CD4-positive, alpha-beta memory T cell (primary cell): ENCODE measurements at regions of chr17 and their contacts with region 1.

Region 1: DNA sequence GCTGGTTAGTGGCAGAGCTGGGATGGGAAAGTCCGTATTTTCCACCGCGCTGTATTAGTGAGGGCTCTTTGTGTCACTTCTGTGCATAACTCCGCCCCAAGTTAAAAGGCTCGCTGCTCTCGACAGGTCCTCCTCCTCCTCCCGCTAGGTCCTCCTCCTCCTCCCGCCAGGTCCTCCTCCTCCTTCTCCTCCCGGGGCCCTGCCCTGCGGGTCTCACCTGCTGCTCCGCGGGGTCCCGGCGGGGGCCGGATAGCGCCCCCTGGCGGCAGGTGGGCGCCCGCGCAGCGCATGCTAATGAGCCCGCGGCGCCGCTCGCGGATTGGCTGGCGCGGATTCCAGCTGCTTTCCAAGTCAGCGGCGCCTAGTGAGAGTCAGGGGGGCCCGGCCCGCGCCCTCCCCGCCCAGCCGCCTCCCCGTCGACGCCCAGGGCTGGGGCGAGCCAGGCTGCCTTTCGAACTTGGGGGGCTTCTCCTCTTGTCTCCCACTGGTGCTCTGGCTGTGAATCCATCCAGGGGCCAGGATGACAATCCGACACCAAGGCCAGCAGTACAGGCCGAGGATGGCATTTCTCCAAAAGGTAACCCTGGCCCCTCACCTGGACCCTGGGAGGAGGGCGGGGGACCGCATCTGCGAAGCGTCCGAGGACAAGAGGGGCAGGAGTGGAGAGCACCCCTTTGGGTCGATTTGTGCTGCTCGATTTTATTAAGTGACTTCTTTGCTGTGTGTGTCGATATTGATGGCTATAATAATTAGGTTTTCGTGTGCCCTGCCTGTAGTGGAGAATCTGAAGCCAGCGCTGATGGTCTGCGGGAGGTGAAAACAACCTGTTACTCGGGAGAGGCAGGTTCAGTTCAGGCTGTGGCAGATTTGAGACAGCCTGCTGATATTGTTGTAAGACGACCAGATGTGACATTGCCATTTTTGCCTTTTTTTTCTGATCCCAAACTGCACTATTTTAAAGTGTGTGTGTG is at the start of gene RGS9:
- DNase-seq: peak; percentile 84 to 88 (median 85)
- H3K4me3 ChIP-seq: peak within 1 kb of the TSS; percentile 36 to 50
- H3K4me3 Mint-ChIP-seq: peak within 1 kb of the TSS; percentile 76 to 91 (median 85)
- H3K27ac ChIP-seq: no peak within 1 kb of the TSS
- H3K27ac Mint-ChIP-seq: peak within 1 kb of the TSS in 6 of 7 donors; percentile 57 to 85 (median 74)
- H3K4me1 ChIP-seq: peaks cover 26% of the 10 kb centered on the region
- H3K4me1 Mint-ChIP-seq: peaks cover 11 to 41% (median 22%) of the 10 kb centered on the region in 4 donors
- H3K27me3 ChIP-seq: no peaks in the 10 kb centered on the region
- H3K27me3 Mint-ChIP-seq: peaks cover 0 to 1% of the 10 kb centered on the region in 2 donors
- total RNA-seq, gene RGS9: 0.67 to 0.84 TPM

Region 2: DNA sequence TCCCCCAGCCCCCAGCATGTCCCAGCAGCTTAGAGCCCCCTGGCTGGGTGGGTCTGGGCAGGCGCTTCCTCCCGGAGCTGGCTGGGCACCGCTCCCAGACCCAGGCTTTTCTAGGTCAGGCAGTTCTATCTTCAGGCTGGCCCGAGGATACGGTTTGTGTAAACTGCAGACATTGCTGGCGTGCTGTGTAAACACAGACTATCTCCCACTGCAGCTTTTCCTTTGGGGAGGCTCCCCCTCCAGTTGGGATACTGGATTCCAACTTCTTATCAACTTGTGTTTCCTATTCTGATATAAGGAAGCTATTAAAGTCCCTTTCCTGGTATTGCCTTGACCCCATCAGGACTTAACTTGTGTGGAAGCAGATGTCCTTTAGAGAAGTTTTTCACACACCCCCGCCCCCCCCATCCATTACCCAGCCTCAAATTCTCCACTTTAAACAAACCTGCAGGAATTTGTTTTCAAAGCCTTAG is 62.5 kb before region 1 on chr17:
- CTCF ChIA-PET with region 1: no interaction called
- POLR2A ChIA-PET with region 1: no interaction called
- intact Hi-C with region 1: no loop called
- DNase-seq: no peak
- H3K4me3 ChIP-seq: no peak overlapping the region
- H3K4me3 Mint-ChIP-seq: no peak overlapping the region
- H3K27ac ChIP-seq: no peak overlapping the region
- H3K27ac Mint-ChIP-seq: no peak overlapping the region
- H3K4me1 ChIP-seq: no peaks in the 10 kb centered on the region
- H3K4me1 Mint-ChIP-seq: no peaks in the 10 kb centered on the region
- H3K27me3 ChIP-seq: no peaks in the 10 kb centered on the region
- H3K27me3 Mint-ChIP-seq: no peaks in the 10 kb centered on the region

Region 3: GRCh38 chr17:65122836-65123756 is 14.2 kb before region 1 on chr17:
- CTCF ChIA-PET with region 1: interaction called, 15 read pairs
- POLR2A ChIA-PET with region 1: interaction called, 16 read pairs
- intact Hi-C with region 1: loop called (anchors 1 kb)
- DNase-seq: peak; percentile 86 to 90 (median 88)
- H3K4me3 ChIP-seq: peak overlapping the region; percentile 4 to 57
- H3K4me3 Mint-ChIP-seq: peak overlapping the region; percentile 87 to 96 (median 92)
- H3K27ac ChIP-seq: peak overlapping the region; percentile 53
- H3K27ac Mint-ChIP-seq: peak overlapping the region; percentile 80 to 99 (median 99)
- H3K4me1 ChIP-seq: peaks cover 20% of the 10 kb centered on the region
- H3K4me1 Mint-ChIP-seq: peaks cover 11 to 27% (median 20%) of the 10 kb centered on the region in 4 donors
- H3K27me3 ChIP-seq: no peaks in the 10 kb centered on the region
- H3K27me3 Mint-ChIP-seq: peaks cover 0 to 5% of the 10 kb centered on the region in 2 donors

Region 4: DNA sequence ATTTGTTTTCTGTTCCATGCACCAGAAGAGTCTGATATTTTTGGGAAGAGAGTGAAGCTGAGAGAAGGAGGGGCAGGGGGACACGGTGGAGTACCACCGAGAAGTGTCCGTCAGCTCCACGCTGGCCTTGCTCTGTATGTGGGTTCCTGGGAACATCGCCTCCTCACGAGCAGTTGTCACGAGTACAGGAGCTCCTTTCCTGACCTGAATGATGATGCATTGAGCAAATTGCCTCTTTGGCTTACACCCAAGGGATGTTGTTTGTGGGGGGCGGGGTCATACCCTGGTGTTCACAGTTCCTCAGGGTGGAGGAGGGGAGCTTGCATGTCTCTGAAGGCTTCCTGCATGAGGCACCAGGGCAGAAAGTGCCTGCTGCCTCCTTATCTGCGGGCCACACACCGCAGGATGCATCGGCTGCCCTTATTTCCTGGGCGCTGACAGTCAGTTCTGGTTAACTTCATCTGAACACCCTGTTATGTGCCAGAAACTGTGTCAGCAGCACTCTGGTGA is 36.0 kb after region 1 on chr17:
- CTCF ChIA-PET with region 1: interaction called, 15 read pairs
- POLR2A ChIA-PET with region 1: interaction called, 9 read pairs
- intact Hi-C with region 1: no loop called
- DNase-seq: peak; percentile 77 to 88 (median 82)
- H3K4me3 ChIP-seq: peak overlapping the region in 1 of 2 donors; percentile 11
- H3K4me3 Mint-ChIP-seq: no peak overlapping the region
- H3K27ac ChIP-seq: peak overlapping the region; percentile 43
- H3K27ac Mint-ChIP-seq: peak overlapping the region in 1 of 7 donors; percentile 90
- H3K4me1 ChIP-seq: peaks cover 44% of the 10 kb centered on the region
- H3K4me1 Mint-ChIP-seq: peaks cover 17 to 31% (median 27%) of the 10 kb centered on the region in 4 donors
- H3K27me3 ChIP-seq: no peaks in the 10 kb centered on the region
- H3K27me3 Mint-ChIP-seq: peaks cover 0 to 1% of the 10 kb centered on the region in 2 donors

Region 5: DNA sequence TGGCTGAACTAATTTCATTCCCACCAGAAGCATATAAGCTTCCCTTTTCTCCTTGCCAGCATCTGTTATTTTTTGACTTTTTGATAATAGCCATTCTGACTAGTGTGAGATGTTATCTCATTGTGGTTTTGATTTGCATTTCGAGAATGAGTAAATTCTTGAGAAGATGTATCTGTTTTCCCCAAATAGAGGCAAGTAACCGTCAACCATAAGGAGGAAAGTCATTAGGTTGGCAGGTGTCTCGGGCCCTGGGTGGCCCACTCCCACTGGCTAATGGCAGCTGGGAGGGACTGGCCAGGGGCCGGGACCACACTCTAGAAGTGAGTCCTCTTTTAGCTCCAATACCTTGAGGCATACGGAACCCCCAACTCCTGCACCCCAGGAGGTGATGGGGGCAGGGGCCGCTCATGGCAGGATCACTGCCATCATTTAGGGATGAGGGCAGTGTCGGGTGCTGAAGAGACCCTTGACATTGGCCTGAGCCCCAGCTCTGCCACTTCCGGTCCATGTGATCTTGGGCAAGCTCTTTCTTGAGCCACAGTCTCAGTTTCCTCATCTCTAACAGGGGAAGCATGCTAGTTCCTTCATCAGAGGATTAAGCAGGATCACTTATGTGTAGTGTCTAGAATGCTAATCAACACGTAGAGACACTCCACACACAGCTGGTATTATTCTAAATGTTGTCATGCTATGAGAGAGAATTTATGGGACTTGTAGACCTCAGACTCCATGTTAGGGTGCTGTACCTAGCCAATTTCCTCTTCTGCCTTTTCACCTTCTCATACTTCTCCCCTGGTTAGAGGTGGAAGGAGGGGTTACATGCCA is 44.1 kb after region 1 on chr17:
- CTCF ChIA-PET with region 1: interaction called, 15 read pairs
- POLR2A ChIA-PET with region 1: interaction called, 9 read pairs
- intact Hi-C with region 1: no loop called
- DNase-seq: peak in 2 of 5 donors; percentile 21 to 22
- H3K4me3 ChIP-seq: no peak overlapping the region
- H3K4me3 Mint-ChIP-seq: peak overlapping the region; percentile 10 to 86 (median 58)
- H3K27ac ChIP-seq: peak overlapping the region; percentile 2
- H3K27ac Mint-ChIP-seq: peak overlapping the region; percentile 63 to 98 (median 90)
- H3K4me1 ChIP-seq: peaks cover 54% of the 10 kb centered on the region
- H3K4me1 Mint-ChIP-seq: peaks cover 51 to 76% (median 66%) of the 10 kb centered on the region in 4 donors
- H3K27me3 ChIP-seq: no peaks in the 10 kb centered on the region
- H3K27me3 Mint-ChIP-seq: no peaks in the 10 kb centered on the region

Region 6: DNA sequence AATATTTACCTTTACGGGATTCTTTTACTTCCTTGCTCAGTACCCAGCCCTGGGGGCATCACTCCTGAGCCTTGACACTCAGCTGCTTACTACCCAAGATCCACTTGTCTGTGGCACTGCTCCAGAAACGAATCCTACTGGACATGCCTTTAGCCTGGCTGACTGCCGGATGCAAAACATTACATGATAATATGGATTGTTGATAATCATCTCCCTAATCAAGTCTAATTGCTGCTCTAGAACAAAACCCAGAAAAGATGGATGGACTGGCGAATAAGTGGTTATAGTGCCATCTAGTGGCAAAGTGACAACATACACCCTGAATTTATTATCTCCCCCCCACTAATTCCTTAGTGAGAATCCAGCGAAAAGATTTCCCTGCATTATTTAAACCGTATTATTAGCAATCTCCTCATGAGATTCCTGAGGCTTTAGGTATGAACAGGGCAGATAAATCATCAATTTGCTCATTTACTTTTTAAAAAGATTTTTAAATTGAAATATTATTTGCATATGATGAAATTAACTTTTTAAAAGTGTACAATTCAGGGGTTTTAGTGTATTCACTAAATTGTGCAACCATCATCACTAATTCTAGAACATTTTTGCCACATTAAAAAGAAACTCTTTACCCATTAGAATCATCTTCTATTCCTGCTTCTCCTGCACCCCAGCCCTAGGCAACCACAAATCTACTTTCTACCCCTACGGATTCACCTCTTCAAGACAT is 61.5 kb after region 1 on chr17:
- CTCF ChIA-PET with region 1: interaction called, 14 read pairs
- POLR2A ChIA-PET with region 1: interaction called, 7 read pairs
- intact Hi-C with region 1: loop called (anchors 1 kb)
- DNase-seq: peak in 4 of 5 donors; percentile 65 to 68 (median 68)
- H3K4me3 ChIP-seq: no peak overlapping the region
- H3K4me3 Mint-ChIP-seq: no peak overlapping the region
- H3K27ac ChIP-seq: no peak overlapping the region
- H3K27ac Mint-ChIP-seq: peak overlapping the region in 2 of 7 donors; percentile 3 to 15
- H3K4me1 ChIP-seq: peaks cover 6% of the 10 kb centered on the region
- H3K4me1 Mint-ChIP-seq: peaks cover 0 to 6% (median 4%) of the 10 kb centered on the region in 4 donors
- H3K27me3 ChIP-seq: no peaks in the 10 kb centered on the region
- H3K27me3 Mint-ChIP-seq: no peaks in the 10 kb centered on the region

Region 7: GRCh38 chr17:65261682-65262636 is 124.7 kb after region 1 on chr17:
- CTCF ChIA-PET with region 1: no interaction called
- POLR2A ChIA-PET with region 1: no interaction called
- intact Hi-C with region 1: no loop called
- DNase-seq: peak in 2 of 5 donors; percentile 2 to 20
- H3K4me3 ChIP-seq: no peak overlapping the region
- H3K4me3 Mint-ChIP-seq: peak overlapping the region in 5 of 8 donors; percentile 3 to 66 (median 18)
- H3K27ac ChIP-seq: no peak overlapping the region
- H3K27ac Mint-ChIP-seq: peak overlapping the region in 1 of 7 donors; percentile 5
- H3K4me1 ChIP-seq: peaks cover 26% of the 10 kb centered on the region
- H3K4me1 Mint-ChIP-seq: peaks cover 21 to 48% (median 29%) of the 10 kb centered on the region in 4 donors
- H3K27me3 ChIP-seq: no peaks in the 10 kb centered on the region
- H3K27me3 Mint-ChIP-seq: peaks cover 0 to 5% of the 10 kb centered on the region in 2 donors

Region 8: GRCh38 chr17:65324611-65325342 is 187.5 kb after region 1 on chr17:
- CTCF ChIA-PET with region 1: no interaction called
- POLR2A ChIA-PET with region 1: no interaction called
- intact Hi-C with region 1: no loop called
- DNase-seq: no peak
- H3K4me3 ChIP-seq: no peak overlapping the region
- H3K4me3 Mint-ChIP-seq: no peak overlapping the region
- H3K27ac ChIP-seq: no peak overlapping the region
- H3K27ac Mint-ChIP-seq: no peak overlapping the region
- H3K4me1 ChIP-seq: no peaks in the 10 kb centered on the region
- H3K4me1 Mint-ChIP-seq: peaks cover 0 to 1% (median 0%) of the 10 kb centered on the region in 4 donors
- H3K27me3 ChIP-seq: no peaks in the 10 kb centered on the region
- H3K27me3 Mint-ChIP-seq: peaks cover 2 to 8% of the 10 kb centered on the region in 2 donors